MCF 10A (cell line): ENCODE measurements at regions of chr1 and their contacts with region 1.

Region 1: GRCh38 chr1:17335821-17336710 is 28.1 kb downstream of the PADI4 start:
- DNase-seq: peak; percentile 88
- H3K4me3 Mint-ChIP-seq: no peak overlapping the region
- H3K27ac Mint-ChIP-seq: no peak overlapping the region
- H3K4me1 Mint-ChIP-seq: peaks cover 17% of the 10 kb centered on the region
- H3K27me3 Mint-ChIP-seq: no peaks in the 10 kb centered on the region
- CTCF ChIP-seq: peak; percentile 81

Region 2: DNA sequence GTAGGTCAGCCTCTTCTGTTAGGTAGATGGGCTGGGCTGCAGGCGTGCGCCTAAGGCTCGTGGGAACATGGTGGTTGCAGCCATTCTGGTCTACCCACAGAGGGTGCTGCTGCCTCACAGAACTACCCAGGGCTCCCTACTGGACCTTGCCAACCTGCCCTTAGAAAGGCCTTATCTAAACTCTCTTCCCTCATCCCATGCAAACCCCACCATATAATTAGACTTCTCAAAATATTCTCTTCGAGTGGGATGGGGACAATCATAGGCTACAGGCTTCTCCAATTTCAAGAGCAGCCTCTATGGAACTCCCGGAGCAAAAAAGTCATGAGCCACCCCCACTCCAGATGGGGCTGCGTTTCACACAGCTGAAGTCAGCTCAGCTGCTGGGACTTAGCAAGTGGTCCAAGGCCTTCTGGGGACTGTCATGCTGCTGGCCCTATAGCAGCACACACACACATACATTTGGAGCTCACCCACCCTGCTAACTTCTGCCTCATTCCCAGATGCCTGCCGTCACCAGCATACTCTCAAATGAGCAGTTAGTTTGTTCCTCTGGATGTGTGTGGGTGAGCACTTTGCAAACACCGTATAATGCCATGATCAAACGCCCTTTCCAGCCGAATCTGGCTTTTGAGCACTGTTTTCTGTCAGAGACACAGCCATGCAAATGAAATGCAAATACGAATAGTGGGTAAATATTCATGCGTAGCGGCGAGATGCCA is 276.2 kb before region 1 on chr1:
- CTCF ChIA-PET with region 1: no interaction called
- POLR2A ChIA-PET with region 1: no interaction called
- intact Hi-C with region 1: loop called (anchors 10 kb)
- DNase-seq: peak; percentile 77
- H3K4me3 Mint-ChIP-seq: no peak overlapping the region
- H3K27ac Mint-ChIP-seq: no peak overlapping the region
- H3K4me1 Mint-ChIP-seq: no peaks in the 10 kb centered on the region
- H3K27me3 Mint-ChIP-seq: no peaks in the 10 kb centered on the region
- CTCF ChIP-seq: peak; percentile 85

Region 3: DNA sequence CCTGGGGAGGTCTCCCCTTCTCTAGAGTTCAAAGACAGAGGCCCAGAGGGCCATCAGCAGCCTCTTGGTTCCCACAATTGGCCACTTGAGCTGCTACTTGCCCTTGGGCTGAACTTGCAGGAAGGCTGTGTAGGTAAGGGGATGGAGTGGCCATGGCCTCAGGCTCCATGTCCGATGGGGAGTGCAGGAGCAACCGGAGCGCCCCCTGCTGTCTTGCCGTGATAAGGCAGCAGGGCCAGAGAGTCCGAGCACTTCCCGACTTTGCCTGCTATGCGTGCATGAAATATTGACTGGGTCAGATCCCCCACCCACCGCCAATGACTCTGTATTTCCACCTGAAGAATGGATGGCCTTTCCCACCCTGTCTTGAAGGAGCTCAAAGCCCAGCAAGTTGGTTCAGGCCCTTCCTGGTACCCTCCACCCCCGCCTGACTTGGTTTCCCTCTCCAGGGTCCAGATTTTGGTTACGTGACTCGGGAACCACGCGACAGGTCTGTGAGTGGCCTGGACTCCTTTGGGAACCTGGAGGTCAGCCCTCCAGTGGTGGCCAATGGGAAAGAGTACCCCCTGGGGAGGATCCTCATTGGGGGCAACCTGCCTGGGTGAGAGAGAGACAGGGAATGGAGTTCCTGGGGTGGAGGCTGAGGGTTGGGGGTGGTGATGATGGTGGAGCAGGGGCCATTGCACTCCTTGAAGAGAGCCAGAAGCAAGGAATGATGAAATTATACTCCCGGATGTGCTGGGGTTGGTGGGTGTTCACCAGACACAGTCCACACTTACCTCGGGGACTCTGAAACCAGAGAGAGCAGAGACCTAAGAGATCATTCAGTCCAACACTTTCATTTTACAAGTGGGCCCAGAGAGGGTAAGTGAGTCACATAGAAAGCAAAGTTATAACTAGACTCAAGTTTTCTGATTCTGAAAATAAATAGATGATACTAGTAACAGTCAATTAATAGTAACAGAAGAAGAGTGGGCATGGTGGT is 61.6 kb before region 1 on chr1:
- CTCF ChIA-PET with region 1: interaction called, 20 read pairs
- POLR2A ChIA-PET with region 1: no interaction called
- intact Hi-C with region 1: loop called (anchors 1 kb)
- DNase-seq: peak; percentile 61
- H3K4me3 Mint-ChIP-seq: no peak overlapping the region
- H3K27ac Mint-ChIP-seq: no peak overlapping the region
- H3K4me1 Mint-ChIP-seq: peaks cover 4% of the 10 kb centered on the region
- H3K27me3 Mint-ChIP-seq: no peaks in the 10 kb centered on the region
- CTCF ChIP-seq: peak; percentile 82

Region 4: DNA sequence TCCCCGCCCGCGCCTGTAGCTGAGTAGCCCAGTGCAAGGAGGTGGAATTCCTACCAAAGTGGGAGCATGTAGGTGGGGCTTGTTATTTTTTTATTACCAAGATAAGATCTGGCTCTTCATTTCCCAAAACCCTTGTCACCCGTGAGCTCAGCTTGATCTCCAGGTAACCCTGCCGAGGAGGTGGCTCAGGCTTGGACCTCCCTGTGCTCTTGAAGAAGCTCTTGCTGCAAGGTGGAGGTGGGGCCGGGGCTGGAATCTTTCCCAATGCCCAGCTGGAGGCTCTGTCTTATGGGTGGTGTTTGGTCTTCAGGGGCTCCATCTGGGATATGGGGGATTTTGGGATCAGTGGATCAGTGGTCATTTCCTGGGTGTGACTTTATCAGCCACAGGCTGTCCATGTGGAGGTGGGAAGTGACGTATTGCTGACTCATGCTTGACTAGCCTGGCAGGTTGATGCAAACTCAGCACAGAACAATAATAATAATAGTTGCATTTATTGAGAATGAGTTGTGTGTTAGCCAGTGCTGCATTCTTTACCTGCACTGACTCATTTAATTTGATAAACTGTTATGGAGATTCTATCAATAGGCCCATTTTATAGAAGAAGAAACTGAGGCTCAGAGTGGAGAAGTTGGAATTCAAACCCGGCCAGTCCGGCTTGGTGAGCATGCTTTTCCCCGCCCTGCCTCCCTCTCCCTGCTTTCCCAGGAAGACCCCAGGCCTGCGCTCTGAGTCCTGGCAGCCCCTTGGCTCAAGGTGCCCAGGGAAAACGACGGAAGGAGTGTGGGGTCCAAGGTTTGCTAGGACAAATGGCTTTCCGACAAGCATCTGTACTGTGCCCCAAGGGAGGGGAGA is 12.3 kb after region 1 on chr1:
- CTCF ChIA-PET with region 1: interaction called, 8 read pairs
- POLR2A ChIA-PET with region 1: no interaction called
- intact Hi-C with region 1: loop called (anchors 1 kb)
- DNase-seq: peak; percentile 76
- H3K4me3 Mint-ChIP-seq: peak overlapping the region; percentile 11
- H3K27ac Mint-ChIP-seq: peak overlapping the region; percentile 16
- H3K4me1 Mint-ChIP-seq: peaks cover 12% of the 10 kb centered on the region
- H3K27me3 Mint-ChIP-seq: no peaks in the 10 kb centered on the region
- CTCF ChIP-seq: no peak

Region 5: GRCh38 chr1:17405898-17406759 is 70.1 kb after region 1 on chr1:
- CTCF ChIA-PET with region 1: interaction called, 5 read pairs
- POLR2A ChIA-PET with region 1: interaction called, 4 read pairs
- intact Hi-C with region 1: loop called (anchors 2 kb)
- DNase-seq: peak; percentile 61
- H3K4me3 Mint-ChIP-seq: no peak overlapping the region
- H3K27ac Mint-ChIP-seq: no peak overlapping the region
- H3K4me1 Mint-ChIP-seq: peaks cover 10% of the 10 kb centered on the region
- H3K27me3 Mint-ChIP-seq: no peaks in the 10 kb centered on the region
- CTCF ChIP-seq: peak; percentile 82